CD14-positive monocyte (primary cell): ENCODE measurements at regions of chr5 and their contacts with region 1.

Region 1: GRCh38 chr5:96344678-96345577 is 88.1 kb downstream of the PCSK1 start:
- DNase-seq: peak in 2 of 3 donors; percentile 21 to 29
- H3K4me3 ChIP-seq: no peak overlapping the region
- H3K4me3 Mint-ChIP-seq: no peak overlapping the region
- H3K27ac ChIP-seq: no peak overlapping the region
- H3K27ac Mint-ChIP-seq: no peak overlapping the region
- H3K4me1 ChIP-seq: peaks cover 0 to 3% of the 10 kb centered on the region in 2 donors
- H3K4me1 Mint-ChIP-seq: peaks cover 14% of the 10 kb centered on the region
- H3K27me3 ChIP-seq: no peaks in the 10 kb centered on the region
- H3K27me3 Mint-ChIP-seq: no peaks in the 10 kb centered on the region
- CTCF ChIP-seq: peak; percentile 49

Region 2: GRCh38 chr5:96198356-96199058 is 146.4 kb before region 1 on chr5:
- intact Hi-C with region 1: no loop called
- DNase-seq: no peak
- H3K4me3 ChIP-seq: no peak overlapping the region
- H3K4me3 Mint-ChIP-seq: no peak overlapping the region
- H3K27ac ChIP-seq: no peak overlapping the region
- H3K27ac Mint-ChIP-seq: peak overlapping the region in 1 of 7 donors; percentile 52
- H3K4me1 ChIP-seq: peaks cover 24 to 29% of the 10 kb centered on the region in 2 donors
- H3K4me1 Mint-ChIP-seq: peaks cover 36% of the 10 kb centered on the region
- H3K27me3 ChIP-seq: no peaks in the 10 kb centered on the region
- H3K27me3 Mint-ChIP-seq: peaks cover 0 to 4% (median 0%) of the 10 kb centered on the region in 3 donors
- CTCF ChIP-seq: no peak

Region 3: GRCh38 chr5:96601811-96602244 is 256.9 kb after region 1 on chr5:
- intact Hi-C with region 1: loop called in 1 of 2 experiments (anchors 10 kb)
- DNase-seq: peak; percentile 46 to 72 (median 55)
- H3K4me3 ChIP-seq: no peak overlapping the region
- H3K4me3 Mint-ChIP-seq: no peak overlapping the region
- H3K27ac ChIP-seq: no peak overlapping the region
- H3K27ac Mint-ChIP-seq: peak overlapping the region in 1 of 7 donors; percentile 24
- H3K4me1 ChIP-seq: peaks cover 0 to 1% of the 10 kb centered on the region in 2 donors
- H3K4me1 Mint-ChIP-seq: peaks cover 1% of the 10 kb centered on the region
- H3K27me3 ChIP-seq: peaks cover 13 to 14% of the 10 kb centered on the region in 2 donors
- H3K27me3 Mint-ChIP-seq: peaks cover 4 to 13% (median 7%) of the 10 kb centered on the region in 3 donors
- CTCF ChIP-seq: peak; percentile 86